ENCODE measurements at regions of chr16 and their contacts with region 1.

Region 1: DNA sequence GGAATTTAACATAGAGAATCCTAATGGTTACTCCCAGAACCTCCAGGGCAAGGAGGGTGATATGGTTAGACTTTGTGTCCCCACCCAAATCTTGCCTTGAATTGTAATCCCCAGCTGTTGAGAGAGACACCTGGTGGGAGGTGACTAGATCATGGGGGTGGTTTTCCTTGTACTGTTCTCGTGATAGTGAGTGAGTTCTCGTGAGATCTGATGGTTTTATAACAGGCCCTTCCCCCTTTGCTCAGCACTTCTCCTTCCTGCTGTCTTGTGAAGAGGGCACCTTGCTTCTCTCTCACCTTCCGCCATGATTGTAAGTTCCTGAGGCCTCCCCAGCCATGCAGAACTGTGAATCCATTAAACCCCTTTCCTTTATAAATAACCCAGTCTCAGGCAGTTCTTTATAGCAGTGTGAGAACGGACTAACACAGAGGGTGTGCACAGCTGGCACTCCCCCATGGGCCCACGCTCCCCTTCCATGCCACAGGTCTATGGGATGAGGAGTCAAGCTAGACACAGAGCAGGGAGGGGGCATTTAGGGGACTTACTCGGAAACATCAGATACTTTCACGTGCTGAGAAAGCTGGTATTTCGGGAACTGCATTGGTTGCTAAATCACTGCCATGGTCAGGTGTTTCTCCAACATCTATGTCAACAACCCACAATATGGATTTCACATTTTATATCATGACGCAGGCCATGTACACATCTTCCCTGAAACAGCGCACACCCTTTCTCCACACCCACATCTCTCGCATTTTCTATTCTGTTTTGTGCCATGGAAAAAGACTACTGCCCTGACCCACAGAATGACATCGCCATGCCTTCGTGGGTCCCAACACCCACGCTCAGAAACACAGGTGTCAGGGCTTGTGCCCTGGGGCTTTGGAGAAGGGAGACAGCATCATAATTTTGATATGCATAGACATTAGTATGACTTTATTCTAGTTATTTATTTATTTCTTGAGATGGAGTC is 199.1 kb upstream of the GSE1 start:
- DNase-seq: no peak
- ATAC-seq: no peak
- H3K4me3 ChIP-seq: no peak overlapping the region
- H3K4me3 Mint-ChIP-seq: no peak overlapping the region
- H3K27ac ChIP-seq: no peak overlapping the region
- H3K27ac Mint-ChIP-seq: no peak overlapping the region
- H3K4me1 ChIP-seq: peaks cover 7% of the 10 kb centered on the region
- H3K4me1 Mint-ChIP-seq: peaks cover 2% of the 10 kb centered on the region
- H3K27me3 ChIP-seq: no peaks in the 10 kb centered on the region
- H3K27me3 Mint-ChIP-seq: no peaks in the 10 kb centered on the region
- CTCF ChIP-seq: no peak

Region 2: GRCh38 chr16:85399583-85400284 is 14.2 kb before region 1 on chr16:
- CTCF ChIA-PET with region 1: interaction called, 3 read pairs
- POLR2A ChIA-PET with region 1: no interaction called
- intact Hi-C with region 1: loop called in 1 of 2 experiments (anchors 1 kb)
- DNase-seq: no peak
- ATAC-seq: no peak
- H3K4me3 ChIP-seq: no peak overlapping the region
- H3K4me3 Mint-ChIP-seq: no peak overlapping the region
- H3K27ac ChIP-seq: no peak overlapping the region
- H3K27ac Mint-ChIP-seq: no peak overlapping the region
- H3K4me1 ChIP-seq: no peaks in the 10 kb centered on the region
- H3K4me1 Mint-ChIP-seq: peaks cover 2% of the 10 kb centered on the region
- H3K27me3 ChIP-seq: no peaks in the 10 kb centered on the region
- H3K27me3 Mint-ChIP-seq: no peaks in the 10 kb centered on the region
- CTCF ChIP-seq: no peak

Region 3: GRCh38 chr16:86227801-86228200 is 813.8 kb after region 1 on chr16:
- CTCF ChIA-PET with region 1: no interaction called
- POLR2A ChIA-PET with region 1: no interaction called
- intact Hi-C with region 1: no loop called
- DNase-seq: no peak
- ATAC-seq: no peak
- H3K4me3 ChIP-seq: no peak overlapping the region
- H3K4me3 Mint-ChIP-seq: no peak overlapping the region
- H3K27ac ChIP-seq: no peak overlapping the region
- H3K27ac Mint-ChIP-seq: no peak overlapping the region
- H3K4me1 ChIP-seq: no peaks in the 10 kb centered on the region
- H3K4me1 Mint-ChIP-seq: no peaks in the 10 kb centered on the region
- H3K27me3 ChIP-seq: no peaks in the 10 kb centered on the region
- H3K27me3 Mint-ChIP-seq: peaks cover 28% of the 10 kb centered on the region
- CTCF ChIP-seq: no peak

Region 4: GRCh38 chr16:86680162-86680561 is 1266.2 kb after region 1 on chr16:
- CTCF ChIA-PET with region 1: no interaction called
- POLR2A ChIA-PET with region 1: no interaction called
- intact Hi-C with region 1: no loop called
- DNase-seq: no peak
- ATAC-seq: no peak
- H3K4me3 ChIP-seq: no peak overlapping the region
- H3K4me3 Mint-ChIP-seq: no peak overlapping the region
- H3K27ac ChIP-seq: no peak overlapping the region
- H3K27ac Mint-ChIP-seq: no peak overlapping the region
- H3K4me1 ChIP-seq: no peaks in the 10 kb centered on the region
- H3K4me1 Mint-ChIP-seq: no peaks in the 10 kb centered on the region
- H3K27me3 ChIP-seq: no peaks in the 10 kb centered on the region
- H3K27me3 Mint-ChIP-seq: peaks cover 11% of the 10 kb centered on the region
- CTCF ChIP-seq: no peak